ENCODE measurements at regions of chr17 and their contacts with region 1.

Region 1: DNA sequence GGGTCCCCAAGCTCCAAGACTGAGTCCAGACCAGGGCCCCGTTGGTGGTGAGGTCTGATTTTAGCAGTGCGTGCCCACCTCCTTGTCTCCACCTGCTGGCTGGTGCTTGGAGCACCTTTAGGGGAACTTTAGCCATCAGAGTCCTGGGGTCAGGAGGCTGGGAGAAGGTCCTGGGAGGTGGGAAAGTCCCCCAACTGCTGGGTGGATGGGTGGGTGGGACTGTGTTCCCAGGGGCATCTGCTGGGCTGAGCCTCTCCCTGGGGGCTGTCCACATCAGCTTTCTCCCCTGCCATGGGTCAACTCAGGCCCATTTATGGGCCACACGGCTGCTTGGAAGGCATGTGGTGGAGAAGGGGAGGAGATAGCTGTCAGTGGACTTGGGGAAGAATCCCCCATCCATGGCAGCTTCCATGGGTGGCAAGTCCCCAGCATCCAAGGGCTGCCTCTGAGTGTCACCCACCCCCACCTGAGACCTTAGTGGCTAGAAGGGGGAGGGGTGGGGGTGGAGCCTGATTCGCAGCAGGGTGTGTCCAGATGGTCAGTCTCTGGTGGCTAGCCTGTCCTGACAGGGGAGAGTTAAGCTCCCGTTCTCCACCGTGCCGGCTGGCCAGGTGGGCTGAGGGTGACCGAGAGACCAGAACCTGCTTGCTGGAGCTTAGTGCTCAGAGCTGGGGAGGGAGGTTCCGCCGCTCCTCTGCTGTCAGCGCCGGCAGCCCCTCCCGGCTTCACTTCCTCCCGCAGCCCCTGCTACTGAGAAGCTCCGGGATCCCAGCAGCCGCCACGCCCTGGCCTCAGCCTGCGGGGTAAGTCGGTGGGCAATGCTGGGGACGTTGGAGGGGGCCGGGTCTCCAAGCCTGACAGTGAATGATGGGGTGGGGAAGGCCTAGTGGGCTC is at the start of gene TRPV2:
- H3K4me3 Mint-ChIP-seq: peak within 1 kb of the TSS; percentile 89
- H3K27ac Mint-ChIP-seq: peak within 1 kb of the TSS; percentile 98
- H3K4me1 Mint-ChIP-seq: peaks cover 64% of the 10 kb centered on the region
- H3K27me3 Mint-ChIP-seq: peaks cover 2% of the 10 kb centered on the region

Region 2: DNA sequence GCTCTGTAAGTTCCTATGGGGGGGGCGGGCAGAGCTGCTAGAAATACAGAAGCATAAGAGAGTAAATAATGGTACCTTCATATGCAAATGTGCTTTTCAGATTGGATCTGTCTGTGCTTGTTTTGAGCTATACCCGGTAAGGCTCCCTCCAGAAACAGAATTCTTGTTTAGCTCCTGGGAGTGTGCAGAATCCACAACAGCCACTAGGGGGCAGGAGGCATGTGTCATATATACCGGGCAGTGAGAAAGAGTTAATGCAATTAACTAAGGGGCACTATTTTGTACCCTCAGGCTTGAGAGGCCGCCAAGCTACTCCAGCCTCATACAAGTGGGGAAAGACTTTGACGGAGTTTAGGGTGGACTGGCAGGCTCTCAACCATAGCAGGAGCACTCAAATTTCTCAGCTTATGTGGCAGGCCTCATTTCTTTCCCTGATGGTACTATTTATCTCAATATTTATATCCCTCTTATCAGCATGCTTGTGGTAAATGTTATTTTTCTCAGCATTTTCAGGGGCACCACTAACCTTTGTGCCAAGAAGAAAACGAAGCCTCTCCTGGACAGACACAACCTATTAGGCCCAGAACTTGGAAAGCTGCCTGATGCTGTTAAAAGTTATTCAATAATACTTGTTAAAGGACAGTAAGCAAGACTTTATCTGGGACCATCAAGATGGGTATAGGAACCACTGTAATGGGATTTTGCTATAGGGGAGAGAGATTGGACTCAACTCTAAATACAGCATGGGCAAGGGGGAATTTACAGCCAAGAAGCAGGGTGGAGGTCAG is 51.3 kb before region 1 on chr17:
- intact Hi-C with region 1: loop called (anchors 10 kb)
- H3K4me3 Mint-ChIP-seq: no peak overlapping the region
- H3K27ac Mint-ChIP-seq: no peak overlapping the region
- H3K4me1 Mint-ChIP-seq: no peaks in the 10 kb centered on the region
- H3K27me3 Mint-ChIP-seq: peaks cover 3% of the 10 kb centered on the region

Region 3: GRCh38 chr17:16380640-16381495 is 34.4 kb before region 1 on chr17 and contains the start of gene UBB:
- intact Hi-C with region 1: loop called (anchors 2 kb)
- H3K4me3 Mint-ChIP-seq: peak within 1 kb of the TSS; percentile 89
- H3K27ac Mint-ChIP-seq: peak within 1 kb of the TSS; percentile 100
- H3K4me1 Mint-ChIP-seq: peaks cover 24% of the 10 kb centered on the region
- H3K27me3 Mint-ChIP-seq: no peaks in the 10 kb centered on the region

Region 4: DNA sequence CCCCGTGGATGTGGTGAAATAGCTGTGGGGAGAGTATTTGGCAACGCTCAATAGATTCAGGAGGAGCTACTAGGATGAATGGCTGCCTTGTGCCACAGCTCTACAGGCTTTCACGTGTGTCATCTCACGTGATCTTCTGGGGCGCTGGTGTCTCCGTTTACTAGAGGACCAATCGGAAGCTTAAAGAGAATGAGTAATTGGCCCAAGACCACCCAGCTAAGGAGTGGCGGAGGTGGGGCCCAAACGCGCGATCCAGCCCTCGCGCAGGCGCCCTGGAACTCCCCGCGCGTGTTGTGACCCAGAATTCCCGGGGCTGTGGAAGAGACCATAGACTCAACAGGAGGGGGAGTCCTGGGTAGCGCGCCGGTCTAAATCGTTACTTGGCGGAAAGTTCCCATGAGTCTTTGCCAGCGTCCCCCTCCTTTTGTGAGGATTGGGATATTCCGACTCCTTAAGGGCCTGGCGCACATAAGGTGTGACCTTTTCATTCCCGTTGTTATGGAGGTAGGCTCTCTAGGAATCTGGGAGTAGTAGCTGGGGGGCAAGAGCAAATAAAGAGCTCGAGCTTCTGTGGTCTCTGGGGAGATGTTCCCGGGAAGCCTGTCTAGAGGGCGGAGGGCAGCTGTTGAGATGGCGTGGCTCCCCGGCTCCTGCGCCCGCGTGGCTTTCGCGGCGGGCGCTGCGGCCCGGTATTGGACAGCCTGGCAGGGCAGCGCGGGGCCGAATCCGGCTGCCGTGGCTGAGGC is 23.5 kb after region 1 on chr17:
- intact Hi-C with region 1: loop called (anchors 2 kb)
- H3K4me3 Mint-ChIP-seq: peak overlapping the region; percentile 96
- H3K27ac Mint-ChIP-seq: peak overlapping the region; percentile 81
- H3K4me1 Mint-ChIP-seq: peaks cover 69% of the 10 kb centered on the region
- H3K27me3 Mint-ChIP-seq: no peaks in the 10 kb centered on the region

Measured in dendritic cell treated with granulocyte-macrophage colony-stimulating factor and Interleukin-4, amounts not matched to agents 40 ng/mL and 50 ng/mL, for 4 days (primary cell).